ENCODE measurements at regions of chr9 and their contacts with region 1.

Region 1: GRCh38 chr9:91047993-91048607 is 246.5 kb downstream of the SYK start:
- DNase-seq: peak; percentile 31
- H3K4me3 Mint-ChIP-seq: peak overlapping the region; percentile 65
- H3K27ac Mint-ChIP-seq: peak overlapping the region; percentile 92
- H3K4me1 Mint-ChIP-seq: peaks cover 67% of the 10 kb centered on the region
- H3K27me3 Mint-ChIP-seq: peaks cover 4% of the 10 kb centered on the region

Region 2: DNA sequence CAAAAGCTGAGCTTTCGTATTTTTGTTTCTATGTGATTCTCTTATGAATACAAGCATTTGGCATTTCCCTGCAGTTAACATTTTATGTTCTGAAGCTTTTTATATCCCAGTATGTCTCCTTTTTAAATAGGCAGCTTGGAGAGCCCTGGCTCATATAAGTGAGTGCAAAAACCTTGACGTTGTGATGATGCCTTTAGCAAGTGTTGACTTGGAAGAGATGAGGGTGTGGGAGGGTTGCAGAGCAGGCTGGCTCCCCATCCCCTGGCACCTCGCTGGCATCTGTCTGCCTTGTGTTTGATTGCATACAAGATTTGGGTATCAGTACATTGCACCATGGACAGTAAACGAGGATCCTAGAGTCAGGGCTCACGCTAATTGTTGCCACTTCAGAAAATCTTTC is 363.4 kb before region 1 on chr9:
- intact Hi-C with region 1: no loop called
- DNase-seq: no peak
- H3K4me3 Mint-ChIP-seq: no peak overlapping the region
- H3K27ac Mint-ChIP-seq: no peak overlapping the region
- H3K4me1 Mint-ChIP-seq: no peaks in the 10 kb centered on the region
- H3K27me3 Mint-ChIP-seq: no peaks in the 10 kb centered on the region

Region 3: DNA sequence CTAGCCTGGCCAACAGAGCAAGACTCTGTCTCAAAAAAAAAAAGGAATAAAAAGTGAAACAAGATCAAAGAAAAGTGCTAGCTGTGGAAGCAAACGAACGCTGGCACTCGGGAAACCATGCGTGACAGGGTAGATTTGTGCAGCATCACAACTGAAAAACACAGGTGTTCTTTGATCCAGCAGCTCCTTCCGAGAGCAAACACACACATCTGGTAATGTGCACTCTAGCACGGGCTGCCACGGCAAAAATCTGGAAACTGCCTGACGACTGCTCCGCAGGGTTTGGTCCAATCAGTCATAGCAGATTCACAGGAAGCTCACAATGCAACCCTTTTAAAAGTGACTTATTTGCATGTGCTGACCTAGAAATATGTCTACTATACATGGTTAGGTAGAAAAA is 166.5 kb before region 1 on chr9:
- intact Hi-C with region 1: no loop called
- DNase-seq: no peak
- H3K4me3 Mint-ChIP-seq: no peak overlapping the region
- H3K27ac Mint-ChIP-seq: no peak overlapping the region
- H3K4me1 Mint-ChIP-seq: no peaks in the 10 kb centered on the region
- H3K27me3 Mint-ChIP-seq: peaks cover 16% of the 10 kb centered on the region

Region 4: DNA sequence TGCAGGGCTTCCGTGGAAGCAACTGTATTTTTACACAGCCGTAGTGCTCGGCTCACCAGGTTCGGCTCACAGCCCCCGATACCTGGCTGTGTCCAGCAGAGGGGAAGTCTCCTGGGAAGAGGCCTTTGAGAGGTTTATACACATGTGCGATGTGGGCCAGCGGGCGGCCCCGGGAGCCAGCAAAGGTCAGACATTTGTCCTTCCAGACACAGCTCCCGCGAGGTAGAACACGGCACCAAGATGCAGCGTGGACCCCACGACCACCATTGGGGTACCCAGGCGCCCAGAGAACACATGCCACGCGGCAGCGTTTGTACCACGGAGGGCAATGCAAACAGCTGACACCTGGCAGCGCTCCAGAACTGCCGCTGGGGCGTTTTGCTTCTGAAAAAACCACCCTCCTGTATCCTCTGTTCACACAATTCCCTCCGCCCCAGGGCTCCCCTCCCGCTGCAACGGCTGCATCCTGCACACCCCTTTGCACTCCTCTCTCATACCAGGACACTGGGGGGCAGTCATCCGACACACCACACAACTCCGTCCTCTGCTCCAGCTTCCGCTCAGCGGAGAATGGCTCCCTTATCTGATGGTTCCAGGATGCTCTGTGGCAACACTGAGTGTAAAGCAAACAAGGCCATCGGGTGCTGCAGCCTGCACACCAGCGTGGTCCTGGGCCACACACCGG is 11.1 kb before region 1 on chr9:
- intact Hi-C with region 1: loop called (anchors 1 kb)
- DNase-seq: peak; percentile 69
- H3K4me3 Mint-ChIP-seq: peak overlapping the region; percentile 35
- H3K27ac Mint-ChIP-seq: peak overlapping the region; percentile 70
- H3K4me1 Mint-ChIP-seq: peaks cover 61% of the 10 kb centered on the region
- H3K27me3 Mint-ChIP-seq: peaks cover 3% of the 10 kb centered on the region

Region 5: GRCh38 chr9:91101611-91102168 is 53.6 kb after region 1 on chr9:
- intact Hi-C with region 1: loop called (anchors 1 kb)
- DNase-seq: peak; percentile 85
- H3K4me3 Mint-ChIP-seq: peak overlapping the region; percentile 53
- H3K27ac Mint-ChIP-seq: peak overlapping the region; percentile 85
- H3K4me1 Mint-ChIP-seq: peaks cover 72% of the 10 kb centered on the region
- H3K27me3 Mint-ChIP-seq: peaks cover 8% of the 10 kb centered on the region

Region 6: GRCh38 chr9:91177661-91178280 is 129.7 kb after region 1 on chr9:
- intact Hi-C with region 1: loop called (anchors 1 kb)
- DNase-seq: no peak
- H3K4me3 Mint-ChIP-seq: peak overlapping the region; percentile 35
- H3K27ac Mint-ChIP-seq: peak overlapping the region; percentile 96
- H3K4me1 Mint-ChIP-seq: peaks cover 71% of the 10 kb centered on the region
- H3K27me3 Mint-ChIP-seq: no peaks in the 10 kb centered on the region

Region 7: GRCh38 chr9:91245431-91246313 is 197.6 kb after region 1 on chr9:
- intact Hi-C with region 1: loop called (anchors 1 kb)
- DNase-seq: peak; percentile 6
- H3K4me3 Mint-ChIP-seq: no peak overlapping the region
- H3K27ac Mint-ChIP-seq: peak overlapping the region; percentile 79
- H3K4me1 Mint-ChIP-seq: peaks cover 56% of the 10 kb centered on the region
- H3K27me3 Mint-ChIP-seq: no peaks in the 10 kb centered on the region

Region 8: GRCh38 chr9:91361291-91362050 is 313.4 kb after region 1 on chr9 and contains the start of gene AUH:
- intact Hi-C with region 1: loop called (anchors 1 kb)
- DNase-seq: peak; percentile 85
- H3K4me3 Mint-ChIP-seq: peak within 1 kb of the TSS; percentile 97
- H3K27ac Mint-ChIP-seq: peak within 1 kb of the TSS; percentile 94
- H3K4me1 Mint-ChIP-seq: peaks cover 48% of the 10 kb centered on the region
- H3K27me3 Mint-ChIP-seq: no peaks in the 10 kb centered on the region
- total RNA-seq, gene AUH: 50.4 and 53.3 TPM in 2 replicates

Region 9: GRCh38 chr9:91411096-91411771 is 363.1 kb after region 1 on chr9:
- intact Hi-C with region 1: no loop called
- DNase-seq: no peak
- H3K4me3 Mint-ChIP-seq: no peak overlapping the region
- H3K27ac Mint-ChIP-seq: no peak overlapping the region
- H3K4me1 Mint-ChIP-seq: peaks cover 61% of the 10 kb centered on the region
- H3K27me3 Mint-ChIP-seq: no peaks in the 10 kb centered on the region

Measured in activated T-helper 1 cell treated with anti-CD3 and anti-CD28 coated beads, Interleukin-12 subunit alpha, Interleukin-12 subunit beta, Interleukin-2, Interleukin-4 antibody, amounts not matched to agents 30 ng/mL and 10 ng/mL and 1 ng/mL, durations not matched to agents 14 hours and 24 hours and 36 hours (primary cell).